Activated T-helper 1 cell treated with anti-CD3 and anti-CD28 coated beads, Interleukin-12 subunit alpha, Interleukin-12 subunit beta, Interleukin-2, Interleukin-4 antibody, amounts not matched to agents 30 ng/mL and 10 ng/mL and 1 ng/mL, durations not matched to agents 14 hours and 24 hours and 36 hours (primary cell): ENCODE measurements at regions of chr4 and their contacts with region 1.

Region 1: DNA sequence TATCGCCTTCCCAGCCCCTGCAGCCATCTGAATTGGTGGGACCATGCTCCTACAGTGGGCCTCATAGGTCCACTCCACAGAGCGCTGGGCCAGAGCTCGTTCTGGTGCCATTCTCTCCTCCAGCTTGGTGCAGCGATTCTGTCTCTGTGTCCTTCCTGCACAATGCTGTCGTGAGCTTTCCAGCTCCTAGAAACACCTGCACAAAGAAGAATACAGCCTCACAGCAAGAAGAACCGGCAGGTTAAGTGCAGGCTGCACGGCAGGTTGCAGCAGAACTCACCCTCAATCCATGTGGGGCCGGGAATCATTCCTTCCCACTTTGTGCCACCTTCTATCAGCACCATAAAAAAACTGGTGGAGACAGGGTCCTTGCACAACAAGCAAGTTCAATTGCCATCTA is 101.2 kb upstream of the ENPP6 start:
- DNase-seq: no peak
- H3K4me3 Mint-ChIP-seq: peak overlapping the region; percentile 23
- H3K27ac Mint-ChIP-seq: peak overlapping the region; percentile 89
- H3K4me1 Mint-ChIP-seq: peaks cover 71% of the 10 kb centered on the region
- H3K27me3 Mint-ChIP-seq: no peaks in the 10 kb centered on the region

Region 2: GRCh38 chr4:184237612-184238011 is 81.2 kb before region 1 on chr4:
- intact Hi-C with region 1: loop called (anchors 1 kb)
- DNase-seq: peak; percentile 62
- H3K4me3 Mint-ChIP-seq: peak overlapping the region; percentile 70
- H3K27ac Mint-ChIP-seq: peak overlapping the region; percentile 97
- H3K4me1 Mint-ChIP-seq: peaks cover 59% of the 10 kb centered on the region
- H3K27me3 Mint-ChIP-seq: no peaks in the 10 kb centered on the region

Region 3: GRCh38 chr4:184250795-184251669 is 67.8 kb before region 1 on chr4:
- intact Hi-C with region 1: no loop called
- DNase-seq: no peak
- H3K4me3 Mint-ChIP-seq: peak overlapping the region; percentile 27
- H3K27ac Mint-ChIP-seq: peak overlapping the region; percentile 94
- H3K4me1 Mint-ChIP-seq: peaks cover 38% of the 10 kb centered on the region
- H3K27me3 Mint-ChIP-seq: peaks cover 1% of the 10 kb centered on the region

Region 4: GRCh38 chr4:184287697-184288255 is 31.1 kb before region 1 on chr4:
- intact Hi-C with region 1: loop called (anchors 1 kb)
- DNase-seq: no peak
- H3K4me3 Mint-ChIP-seq: peak overlapping the region; percentile 12
- H3K27ac Mint-ChIP-seq: peak overlapping the region; percentile 13
- H3K4me1 Mint-ChIP-seq: peaks cover 53% of the 10 kb centered on the region
- H3K27me3 Mint-ChIP-seq: no peaks in the 10 kb centered on the region

Region 5: GRCh38 chr4:184335520-184335919 is 16.7 kb after region 1 on chr4:
- intact Hi-C with region 1: loop called (anchors 1 kb)
- DNase-seq: no peak
- H3K4me3 Mint-ChIP-seq: peak overlapping the region; percentile 1
- H3K27ac Mint-ChIP-seq: peak overlapping the region; percentile 64
- H3K4me1 Mint-ChIP-seq: peaks cover 54% of the 10 kb centered on the region
- H3K27me3 Mint-ChIP-seq: no peaks in the 10 kb centered on the region

Region 6: GRCh38 chr4:184370711-184371389 is 52.0 kb after region 1 on chr4:
- intact Hi-C with region 1: no loop called
- DNase-seq: no peak
- H3K4me3 Mint-ChIP-seq: no peak overlapping the region
- H3K27ac Mint-ChIP-seq: no peak overlapping the region
- H3K4me1 Mint-ChIP-seq: peaks cover 37% of the 10 kb centered on the region
- H3K27me3 Mint-ChIP-seq: no peaks in the 10 kb centered on the region

Region 7: DNA sequence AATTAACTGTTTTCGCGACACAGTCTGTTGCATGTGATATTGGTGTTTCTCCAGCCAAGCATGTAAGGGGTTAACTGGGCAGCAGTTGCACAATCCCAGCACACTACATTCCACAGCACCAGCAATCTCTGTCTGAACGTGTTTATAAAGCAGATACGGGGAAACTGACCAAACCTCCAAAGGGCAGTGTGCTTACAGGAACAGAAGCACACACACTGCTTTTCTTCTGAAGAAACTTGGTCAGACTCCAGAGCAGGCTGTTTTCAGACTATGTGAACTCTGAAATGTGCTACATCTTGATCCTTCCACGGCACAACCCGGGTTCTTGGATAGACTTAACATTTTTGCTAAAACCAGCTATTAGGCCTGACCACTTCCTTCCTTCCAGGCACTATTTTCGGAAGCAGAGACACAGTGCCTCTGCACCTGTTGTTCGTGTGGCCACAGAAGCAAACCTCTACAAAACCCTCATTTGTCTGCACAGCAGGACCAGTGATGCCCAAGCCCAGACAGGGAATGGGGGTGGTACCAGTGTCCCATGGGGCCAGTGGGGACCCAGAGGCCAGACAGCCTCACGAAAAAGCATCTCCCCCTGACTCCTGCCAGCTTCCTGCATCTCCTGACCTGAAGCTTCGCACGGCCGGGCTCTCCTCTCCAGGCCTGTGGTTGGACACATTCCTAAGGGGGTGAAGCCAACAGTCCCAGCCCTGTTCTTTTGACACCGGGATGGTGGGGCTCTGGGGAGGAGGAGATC is 65.4 kb after region 1 on chr4:
- intact Hi-C with region 1: loop called (anchors 5 kb)
- DNase-seq: no peak
- H3K4me3 Mint-ChIP-seq: peak overlapping the region; percentile 57
- H3K27ac Mint-ChIP-seq: peak overlapping the region; percentile 80
- H3K4me1 Mint-ChIP-seq: peaks cover 76% of the 10 kb centered on the region
- H3K27me3 Mint-ChIP-seq: no peaks in the 10 kb centered on the region

Region 8: GRCh38 chr4:184514121-184514988 is 195.5 kb after region 1 on chr4:
- intact Hi-C with region 1: loop called (anchors 1 kb)
- DNase-seq: peak; percentile 56
- H3K4me3 Mint-ChIP-seq: peak overlapping the region; percentile 46
- H3K27ac Mint-ChIP-seq: peak overlapping the region; percentile 93
- H3K4me1 Mint-ChIP-seq: peaks cover 56% of the 10 kb centered on the region
- H3K27me3 Mint-ChIP-seq: no peaks in the 10 kb centered on the region